Adrenal gland (tissue), 19 donors: ENCODE measurements at regions of chr2 and their contacts with region 1.

Region 1: GRCh38 chr2:196277002-196277401 is 105.6 kb upstream of the STK17B start:
- DNase-seq: peak in 1 of 7 donors; percentile 28
- H3K4me3 ChIP-seq: no peak overlapping the region
- H3K27ac ChIP-seq: no peak overlapping the region
- H3K4me1 ChIP-seq: peaks cover 9 to 27% of the 10 kb centered on the region in 2 donors
- H3K27me3 ChIP-seq: no peaks in the 10 kb centered on the region
- CTCF ChIP-seq: peak; percentile 34 to 69 (median 64)
- POLR2A ChIP-seq: no peak

Region 2: DNA sequence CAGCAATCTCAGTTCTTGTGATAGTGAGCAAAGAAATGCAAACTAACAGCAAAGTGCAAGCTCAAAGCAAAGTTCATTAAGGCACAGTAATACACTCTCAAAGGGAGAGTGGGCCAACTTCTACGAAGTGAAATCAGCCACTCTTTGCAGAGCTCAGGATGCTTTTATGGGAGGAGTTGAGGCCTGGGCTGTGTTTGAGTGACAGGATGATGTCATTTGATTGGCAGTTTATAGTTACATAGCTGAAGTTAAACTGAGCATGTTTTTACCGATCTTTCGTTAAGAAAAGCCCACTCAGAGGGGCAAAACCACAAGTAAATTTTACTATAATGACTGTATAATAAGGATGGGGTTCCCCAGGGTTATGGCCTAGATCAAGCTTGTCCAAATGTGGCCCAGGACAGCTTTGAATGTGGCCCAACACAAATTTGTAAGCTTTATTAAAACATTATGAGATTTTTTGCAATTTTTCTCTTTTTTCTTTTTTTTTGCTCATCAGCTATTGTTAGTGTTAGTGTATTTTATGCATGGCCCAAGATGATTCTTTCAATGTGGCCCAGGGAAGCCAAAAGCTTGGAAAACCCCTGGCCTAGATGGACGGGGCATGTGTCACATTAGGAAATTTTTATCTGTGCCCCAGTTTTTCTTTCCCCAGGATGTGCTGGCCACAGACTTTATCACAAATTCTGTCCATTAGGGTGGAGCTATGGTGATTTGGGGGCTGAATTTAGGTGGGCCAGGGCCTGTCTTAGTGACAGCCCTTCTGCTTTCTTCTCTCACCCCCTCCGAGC is 200.0 kb before region 1 on chr2:
- intact Hi-C with region 1: loop called (anchors 5 to 10 kb)
- DNase-seq: no peak
- H3K4me3 ChIP-seq: no peak overlapping the region
- H3K27ac ChIP-seq: peak overlapping the region in 2 of 5 donors; percentile 4 to 22
- H3K4me1 ChIP-seq: peaks cover 14 to 34% of the 10 kb centered on the region in 2 donors
- H3K27me3 ChIP-seq: no peaks in the 10 kb centered on the region
- CTCF ChIP-seq: no peak
- POLR2A ChIP-seq: no peak

Region 3: GRCh38 chr2:196719110-196719872 is 442.3 kb after region 1 on chr2:
- intact Hi-C with region 1: no loop called
- DNase-seq: peak in 6 of 7 donors; percentile 16 to 57 (median 21)
- H3K4me3 ChIP-seq: no peak overlapping the region
- H3K27ac ChIP-seq: no peak overlapping the region
- H3K4me1 ChIP-seq: no peaks in the 10 kb centered on the region
- H3K27me3 ChIP-seq: no peaks in the 10 kb centered on the region
- CTCF ChIP-seq: no peak
- POLR2A ChIP-seq: no peak